Endothelial cell of umbilical vein (primary cell): ENCODE measurements at regions of chr17 and their contacts with region 1.

Region 1: GRCh38 chr17:73311781-73312641 is at the start of gene CDC42EP4:
- DNase-seq: peak; percentile 95
- H3K4me3 ChIP-seq: peak within 1 kb of the TSS; percentile 82 to 97 (median 88)
- H3K27ac ChIP-seq: peak within 1 kb of the TSS; percentile 80
- H3K4me1 ChIP-seq: peaks cover 27% of the 10 kb centered on the region
- H3K27me3 ChIP-seq: peaks cover 2% of the 10 kb centered on the region in 2 experiments
- CTCF ChIP-seq: no peak
- POLR2A ChIP-seq: peak; percentile 80
- total RNA-seq, gene CDC42EP4: 18.8 and 19.6 TPM in 2 replicates

Region 2: GRCh38 chr17:73255671-73256181 is 56.3 kb before region 1 on chr17:
- CTCF ChIA-PET with region 1: interaction called, 10 read pairs
- POLR2A ChIA-PET with region 1: no interaction called
- dilution Hi-C with region 1: no loop called
- intact Hi-C with region 1: loop called (anchors 1 kb)
- DNase-seq: peak; percentile 53
- H3K4me3 ChIP-seq: no peak overlapping the region
- H3K27ac ChIP-seq: no peak overlapping the region
- H3K4me1 ChIP-seq: no peaks in the 10 kb centered on the region
- H3K27me3 ChIP-seq: no peaks in the 10 kb centered on the region
- CTCF ChIP-seq: peak; percentile 82 to 96
- POLR2A ChIP-seq: no peak

Region 3: DNA sequence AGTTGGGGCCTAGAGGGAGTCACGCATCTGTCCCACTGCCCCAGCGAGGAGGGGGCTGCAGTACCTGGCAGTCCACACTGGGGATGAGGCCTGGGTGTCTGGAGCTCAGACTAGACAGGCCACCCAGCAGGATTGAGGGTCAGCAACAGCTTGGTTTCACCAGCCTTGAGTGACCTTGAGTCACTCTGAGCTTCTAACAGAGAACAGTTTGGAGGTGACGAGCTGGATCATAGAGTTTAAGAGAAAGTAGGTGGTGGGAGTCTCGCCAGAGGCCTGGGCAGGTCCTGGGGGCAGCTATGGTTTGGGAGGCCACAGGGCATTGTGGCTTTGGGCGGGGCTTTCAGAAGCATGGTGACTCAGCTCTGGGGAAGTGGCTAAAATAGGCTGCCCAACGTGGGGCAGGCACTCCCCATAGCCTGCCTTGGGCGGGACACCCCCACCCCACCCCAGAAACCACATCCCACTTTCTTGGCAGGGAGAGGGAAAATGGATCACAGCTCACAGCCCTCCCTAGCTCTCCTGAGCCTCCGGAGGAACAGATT is 20.7 kb before region 1 on chr17:
- CTCF ChIA-PET with region 1: interaction called, 17 read pairs
- POLR2A ChIA-PET with region 1: no interaction called
- dilution Hi-C with region 1: no loop called
- intact Hi-C with region 1: loop called (anchors 1 kb)
- DNase-seq: peak; percentile 18
- H3K4me3 ChIP-seq: no peak overlapping the region
- H3K27ac ChIP-seq: peak overlapping the region; percentile 79
- H3K4me1 ChIP-seq: peaks cover 25% of the 10 kb centered on the region
- H3K27me3 ChIP-seq: no peaks in the 10 kb centered on the region
- CTCF ChIP-seq: no peak
- POLR2A ChIP-seq: no peak

Region 4: DNA sequence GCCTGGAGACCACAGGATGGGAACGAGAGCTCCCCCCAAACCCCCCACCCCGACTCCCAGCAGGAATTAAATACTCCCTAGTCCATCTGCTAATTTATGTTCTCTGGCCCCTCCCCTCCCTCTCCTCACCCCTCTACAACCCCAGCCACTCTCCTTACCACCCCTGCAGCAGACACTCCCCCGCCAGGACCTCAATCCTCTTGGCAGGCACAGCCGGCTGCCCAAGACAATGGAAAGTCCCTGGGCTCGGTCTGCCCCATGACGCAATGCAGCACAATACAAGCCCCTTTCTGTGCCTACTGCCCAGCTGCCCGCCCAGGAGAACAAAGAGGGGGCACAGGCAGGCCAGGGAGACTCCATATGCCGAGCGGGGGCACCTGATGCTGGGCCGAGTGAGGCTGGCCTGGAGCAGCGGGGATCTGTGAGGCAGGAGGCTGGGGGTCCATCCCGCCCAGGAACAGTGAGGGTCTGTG is 30.1 kb after region 1 on chr17:
- CTCF ChIA-PET with region 1: interaction called, 28 read pairs
- POLR2A ChIA-PET with region 1: no interaction called
- dilution Hi-C with region 1: no loop called
- intact Hi-C with region 1: loop called (anchors 1 kb)
- DNase-seq: peak; percentile 86
- H3K4me3 ChIP-seq: no peak overlapping the region
- H3K27ac ChIP-seq: peak overlapping the region; percentile 16
- H3K4me1 ChIP-seq: peaks cover 8% of the 10 kb centered on the region
- H3K27me3 ChIP-seq: no peaks in the 10 kb centered on the region
- CTCF ChIP-seq: no peak
- POLR2A ChIP-seq: no peak

Region 5: DNA sequence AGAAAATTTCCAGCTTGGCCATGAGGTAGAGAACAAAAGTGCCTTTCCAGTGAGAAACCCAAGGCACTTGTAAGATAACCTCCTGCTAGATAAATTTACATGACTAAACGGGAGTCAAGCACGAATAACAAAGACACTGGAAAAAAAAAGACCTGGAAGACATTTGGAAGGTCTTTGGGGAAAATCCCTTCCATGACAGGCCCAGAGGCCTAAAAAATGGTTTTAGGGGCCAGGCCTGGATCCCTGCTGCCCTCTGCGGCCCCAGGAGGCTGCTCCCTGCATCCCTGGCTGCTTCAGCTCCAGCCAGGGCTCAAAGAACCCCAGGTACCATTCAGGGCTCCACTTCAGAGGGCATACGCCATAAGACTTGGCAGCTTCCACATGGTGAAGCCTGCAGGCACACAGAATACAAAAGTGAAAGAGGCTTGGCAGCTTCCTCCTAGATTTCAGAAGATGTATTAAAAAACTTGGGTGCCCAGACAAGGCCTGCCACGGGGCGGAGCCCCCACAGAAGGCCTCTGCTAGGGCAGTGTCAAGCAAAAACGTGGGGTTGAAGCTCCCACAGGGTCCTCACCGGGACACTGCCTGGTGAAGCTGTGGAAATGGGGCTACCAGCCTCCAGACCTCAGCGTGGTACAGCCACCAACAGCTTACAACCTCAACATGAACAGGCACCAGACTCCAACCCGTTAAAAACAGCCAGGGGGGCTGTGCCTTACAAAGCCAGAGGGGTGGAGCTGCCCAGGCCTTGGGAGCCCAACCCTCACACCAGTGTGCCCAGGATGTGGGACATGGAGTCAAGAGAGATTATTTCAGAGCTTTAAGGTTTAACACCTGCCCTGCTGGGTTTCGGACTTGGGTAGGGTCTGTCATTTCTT is 255.1 kb after region 1 on chr17:
- CTCF ChIA-PET with region 1: no interaction called
- POLR2A ChIA-PET with region 1: no interaction called
- dilution Hi-C with region 1: no loop called
- intact Hi-C with region 1: no loop called
- DNase-seq: no peak
- H3K4me3 ChIP-seq: no peak overlapping the region
- H3K27ac ChIP-seq: no peak overlapping the region
- H3K4me1 ChIP-seq: no peaks in the 10 kb centered on the region
- H3K27me3 ChIP-seq: no peaks in the 10 kb centered on the region
- CTCF ChIP-seq: no peak
- POLR2A ChIP-seq: no peak